ENCODE measurements at regions of chr2 and their contacts with region 1.

Region 1: DNA sequence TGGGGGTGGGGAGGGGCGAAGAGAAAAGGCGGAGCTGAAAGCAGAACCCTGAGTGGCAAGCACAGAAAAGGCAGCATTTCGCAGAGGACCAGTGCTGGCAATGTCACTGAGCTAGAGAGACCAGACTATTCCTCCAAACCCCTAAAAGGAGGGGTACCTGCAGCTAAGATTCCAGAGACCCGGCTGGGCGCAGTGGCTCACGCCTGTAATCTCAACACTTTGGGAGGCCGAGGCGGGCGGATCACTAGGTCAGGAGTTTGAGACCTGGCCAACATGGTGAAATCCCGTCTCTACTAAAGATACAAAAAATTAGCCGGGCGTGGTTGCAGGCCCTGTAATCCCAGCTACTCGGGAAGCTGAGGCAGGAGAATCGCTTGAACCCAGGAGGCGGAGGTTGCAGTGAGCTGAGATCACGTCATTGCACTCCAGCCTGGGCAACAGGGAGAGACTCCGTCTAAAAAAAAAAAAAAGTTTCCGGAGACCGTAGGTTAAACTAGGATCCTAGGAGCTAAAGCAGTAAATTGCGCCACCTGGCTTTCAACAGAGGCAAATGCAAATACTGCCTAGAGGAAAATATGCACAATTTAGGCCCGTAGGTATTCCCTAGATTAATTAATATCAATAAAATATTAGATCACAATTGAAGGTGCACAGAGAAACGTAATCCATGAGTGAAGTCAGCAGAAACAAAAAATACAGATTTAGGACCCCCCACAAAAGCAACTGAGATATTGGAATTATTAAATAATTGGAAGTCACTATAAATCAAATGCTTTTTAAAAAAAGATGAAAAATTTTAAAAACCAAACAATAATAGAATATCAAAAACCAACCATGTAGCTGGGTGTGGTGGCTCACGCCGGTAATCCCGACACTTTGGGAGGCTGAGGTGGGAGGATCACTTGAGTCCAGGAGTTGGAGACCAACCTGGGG is 4.9 kb downstream of the UCN start:
- DNase-seq: peak; percentile 80 to 86
- ATAC-seq: peak; percentile 47 to 85; a peak in 4 of 6 replicates
- H3K4me3 ChIP-seq: peak overlapping the region; percentile 37
- H3K27ac ChIP-seq: peak overlapping the region; percentile 60 to 83
- H3K4me1 ChIP-seq: 0 out of 3 replicates have a peak, but pooled peaks cover 3% of the 10 kb centered on the region
- CTCF ChIP-seq: peak; percentile 97
- EP300 ChIP-seq: no peak
- POLR2A ChIP-seq: no peak
- RAD21 ChIP-seq: peak; percentile 92

Region 2: DNA sequence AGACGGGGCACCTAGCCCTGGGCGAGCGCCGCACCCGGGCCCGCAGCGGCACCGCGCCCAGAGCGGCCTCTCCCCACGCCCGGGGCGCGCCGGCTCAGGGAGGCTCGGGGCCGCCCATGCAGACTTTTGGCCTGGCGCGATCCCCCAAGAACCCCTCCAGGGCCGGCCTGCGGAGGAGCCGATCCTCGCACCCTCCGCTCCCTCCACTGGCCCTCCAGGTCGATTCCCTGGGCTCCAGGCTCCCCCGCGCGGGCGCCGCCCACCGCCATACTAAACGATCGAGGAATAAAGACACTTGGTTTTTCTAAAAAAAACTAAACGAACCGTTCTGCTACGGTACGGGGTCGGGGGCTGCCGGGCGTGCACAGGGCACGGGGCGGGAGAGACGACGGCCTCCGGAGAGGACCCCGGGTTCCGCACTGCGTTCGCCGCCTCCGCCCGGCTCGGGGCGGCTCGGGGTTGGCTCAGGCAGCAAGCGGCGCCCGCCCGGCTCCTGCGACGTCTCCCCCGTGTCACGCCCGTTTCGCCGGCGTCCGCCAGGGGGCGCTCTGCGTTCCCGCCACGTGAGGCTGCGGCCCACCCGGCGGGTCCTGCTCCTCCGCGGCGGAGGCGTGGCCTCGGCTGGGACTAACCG is 217.2 kb before region 1 on chr2:
- CTCF ChIA-PET with region 1: interaction called, 17 read pairs
- POLR2A ChIA-PET with region 1: interaction called, 4 read pairs
- DNase-seq: peak; percentile 95 to 97
- ATAC-seq: peak; percentile 73 to 89
- H3K4me3 ChIP-seq: peak overlapping the region; percentile 70
- H3K27ac ChIP-seq: peak overlapping the region; percentile 90 to 91
- H3K4me1 ChIP-seq: peaks cover 17% of the 10 kb centered on the region
- CTCF ChIP-seq: peak; percentile 98
- EP300 ChIP-seq: no peak
- POLR2A ChIP-seq: peak; percentile 41; the same call in 1 of the 2 replicates
- RAD21 ChIP-seq: peak; percentile 31 to 63; a peak in 4 of 5 replicates

Region 3: GRCh38 chr2:27170581-27171333 is 132.6 kb before region 1 on chr2:
- CTCF ChIA-PET with region 1: interaction called, 29 read pairs
- POLR2A ChIA-PET with region 1: no interaction called
- DNase-seq: no peak
- ATAC-seq: no peak
- H3K4me3 ChIP-seq: no peak overlapping the region
- H3K27ac ChIP-seq: no peak overlapping the region
- H3K4me1 ChIP-seq: no peaks in the 10 kb centered on the region
- CTCF ChIP-seq: no peak
- EP300 ChIP-seq: no peak
- POLR2A ChIP-seq: no peak
- RAD21 ChIP-seq: no peak

Region 4: DNA sequence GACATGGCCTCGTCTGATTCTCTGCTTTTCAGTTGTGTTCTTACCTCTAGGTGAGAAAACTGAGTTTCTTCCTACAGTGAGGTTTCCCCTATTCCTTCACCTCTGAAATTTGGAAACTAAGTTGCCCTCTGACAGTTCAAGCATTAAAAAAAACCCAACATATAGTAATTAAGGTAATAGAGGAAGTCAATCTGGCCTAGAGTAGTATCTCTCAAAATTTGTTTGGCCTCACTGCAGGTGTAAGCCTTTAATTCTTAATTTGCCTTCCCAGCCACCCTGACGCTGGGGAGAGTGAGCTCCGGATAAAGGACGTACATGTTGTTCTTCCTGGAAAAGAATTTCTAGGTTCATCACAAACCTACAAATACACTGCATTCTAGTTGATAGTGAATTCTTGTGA is 84.7 kb before region 1 on chr2:
- CTCF ChIA-PET with region 1: no interaction called
- POLR2A ChIA-PET with region 1: no interaction called
- DNase-seq: no peak
- ATAC-seq: no peak
- H3K4me3 ChIP-seq: peak overlapping the region; percentile 65; the same call in 2 of the 3 replicates
- H3K27ac ChIP-seq: peak overlapping the region in 1 of 2 experiments; percentile 95; a peak in 5 of 6 replicates
- H3K4me1 ChIP-seq: peaks cover 23% of the 10 kb centered on the region
- CTCF ChIP-seq: no peak
- EP300 ChIP-seq: no peak
- POLR2A ChIP-seq: no peak
- RAD21 ChIP-seq: no peak

Region 5: DNA sequence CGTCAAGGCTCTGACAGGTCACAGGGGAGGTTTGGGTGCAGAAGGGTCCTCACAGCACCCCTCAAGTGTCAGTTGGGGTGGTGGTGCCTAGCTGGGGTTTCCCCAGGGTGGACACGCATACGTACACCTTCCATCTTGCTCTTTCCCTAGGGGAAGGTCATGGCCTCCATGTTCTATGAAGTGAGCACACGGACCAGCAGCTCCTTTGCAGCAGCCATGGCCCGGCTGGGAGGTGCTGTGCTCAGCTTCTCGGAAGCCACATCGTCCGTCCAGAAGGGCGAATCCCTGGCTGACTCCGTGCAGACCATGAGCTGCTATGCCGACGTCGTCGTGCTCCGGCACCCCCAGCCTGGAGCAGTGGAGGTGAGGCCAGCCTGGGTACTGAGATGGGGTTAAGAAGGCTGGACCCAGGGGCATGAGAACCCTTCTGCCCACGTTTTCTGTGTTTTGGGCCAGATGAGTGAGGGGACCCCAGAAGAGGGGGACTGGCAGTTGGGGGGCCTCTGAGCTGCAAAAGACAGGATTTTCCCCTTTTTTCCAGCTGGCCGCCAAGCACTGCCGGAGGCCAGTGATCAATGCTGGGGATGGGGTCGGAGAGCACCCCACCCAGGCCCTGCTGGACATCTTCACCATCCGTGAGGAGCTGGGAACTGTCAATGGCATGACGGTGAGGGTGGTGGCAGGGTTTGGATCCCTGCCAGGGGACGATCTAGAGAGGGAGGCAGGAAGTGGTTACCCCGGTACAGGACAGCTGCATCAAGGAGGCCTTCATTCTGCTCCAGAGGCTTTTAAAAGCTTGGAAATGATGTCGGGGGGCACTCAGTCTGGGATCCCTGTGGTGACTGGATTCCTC is 61.4 kb before region 1 on chr2:
- CTCF ChIA-PET with region 1: interaction called, 45 read pairs
- POLR2A ChIA-PET with region 1: no interaction called
- DNase-seq: no peak
- ATAC-seq: no peak
- H3K4me3 ChIP-seq: no peak overlapping the region
- H3K27ac ChIP-seq: no peak overlapping the region
- H3K4me1 ChIP-seq: no peaks in the 10 kb centered on the region
- CTCF ChIP-seq: no peak
- EP300 ChIP-seq: no peak
- POLR2A ChIP-seq: no peak
- RAD21 ChIP-seq: no peak

Region 6: GRCh38 chr2:27264753-27265535 is 38.4 kb before region 1 on chr2:
- CTCF ChIA-PET with region 1: interaction called, 196 read pairs
- POLR2A ChIA-PET with region 1: no interaction called
- DNase-seq: peak; percentile 82 to 96
- ATAC-seq: peak; percentile 77 to 82
- H3K4me3 ChIP-seq: peak overlapping the region; percentile 75
- H3K27ac ChIP-seq: peak overlapping the region; percentile 32 to 73; a peak in 5 of 6 replicates
- H3K4me1 ChIP-seq: peaks cover 21% of the 10 kb centered on the region
- CTCF ChIP-seq: peak; percentile 71
- EP300 ChIP-seq: no peak
- POLR2A ChIP-seq: no peak
- RAD21 ChIP-seq: peak; percentile 40 to 59; a peak in 4 of 5 replicates

Region 7: GRCh38 chr2:27291865-27292264 is 11.5 kb before region 1 on chr2:
- CTCF ChIA-PET with region 1: interaction called, 394 read pairs
- POLR2A ChIA-PET with region 1: interaction called, 8 read pairs
- DNase-seq: peak; percentile 36 to 66
- ATAC-seq: peak; percentile 77 to 79
- H3K4me3 ChIP-seq: no peak overlapping the region
- H3K27ac ChIP-seq: peak overlapping the region; percentile 19 to 49; a peak in 4 of 6 replicates
- H3K4me1 ChIP-seq: peaks cover 36% of the 10 kb centered on the region
- CTCF ChIP-seq: peak; percentile 36
- EP300 ChIP-seq: no peak
- POLR2A ChIP-seq: no peak
- RAD21 ChIP-seq: peak; percentile 57 to 68

Region 8: DNA sequence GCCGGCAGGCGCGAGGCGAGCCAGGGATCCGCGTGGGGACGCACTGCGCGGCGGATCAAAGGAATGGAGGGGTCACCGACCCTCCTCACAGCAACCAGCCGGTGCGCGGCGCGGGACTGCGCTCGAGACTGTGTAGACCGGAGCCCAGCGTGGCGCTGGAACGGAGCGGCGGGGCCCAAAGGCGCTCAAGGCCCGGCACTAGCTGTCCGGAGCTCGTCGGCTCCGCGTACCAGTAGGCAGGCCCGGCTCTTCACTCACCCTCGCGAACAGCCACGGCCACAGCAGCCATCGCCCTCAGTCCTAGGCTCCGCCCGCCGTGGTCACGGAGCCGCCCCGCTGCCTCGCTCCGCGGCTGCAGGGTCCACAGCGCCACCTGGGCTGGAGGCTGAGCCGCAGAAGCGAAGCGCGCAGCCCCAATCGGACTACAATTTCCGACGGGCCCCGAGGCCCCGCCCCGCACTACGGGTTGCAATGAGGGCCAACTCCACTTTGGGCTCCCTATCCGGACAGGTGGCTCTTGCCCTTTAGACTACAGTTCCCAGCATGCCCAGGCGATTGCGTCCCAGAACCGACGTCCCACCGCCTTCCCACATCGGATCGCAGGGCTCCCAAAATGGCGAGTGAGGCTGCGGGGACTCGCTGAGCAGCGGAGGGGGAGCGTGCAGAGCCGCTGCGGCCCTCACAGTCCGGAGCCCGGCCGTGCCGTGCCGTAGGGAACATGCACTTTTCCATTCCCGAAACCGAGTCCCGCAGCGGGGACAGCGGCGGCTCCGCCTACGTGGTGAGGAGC is 66.9 kb after region 1 on chr2 and contains the starts of genes EIF2B4 and SNX17:
- CTCF ChIA-PET with region 1: interaction called, 10 read pairs
- POLR2A ChIA-PET with region 1: no interaction called
- DNase-seq: peak; percentile 98 to 99
- ATAC-seq: peak; percentile 90 to 94
- H3K4me3 ChIP-seq: peak within 1 kb of the TSS; percentile 79
- H3K27ac ChIP-seq: peak within 1 kb of the TSS; percentile 89 to 95
- H3K4me1 ChIP-seq: peaks cover 24% of the 10 kb centered on the region
- CTCF ChIP-seq: peak; percentile 94
- EP300 ChIP-seq: peak in 1 of 2 experiments; percentile 24; a peak in 1 of 5 replicates
- POLR2A ChIP-seq: peak; percentile 90
- RAD21 ChIP-seq: peak; percentile 58; a peak in 3 of 5 replicates
- polyA plus RNA-seq, gene EIF2B4: 62.8 and 90.3 TPM in 2 replicates
- polyA plus RNA-seq, gene SNX17: 141 and 158 TPM in 2 replicates

Region 9: GRCh38 chr2:27537287-27537686 is 233.9 kb after region 1 on chr2:
- CTCF ChIA-PET with region 1: no interaction called
- POLR2A ChIA-PET with region 1: no interaction called
- DNase-seq: no peak
- ATAC-seq: peak; percentile 13 to 47; a peak in 3 of 6 replicates
- H3K4me3 ChIP-seq: no peak overlapping the region
- H3K27ac ChIP-seq: no peak overlapping the region
- H3K4me1 ChIP-seq: no peaks in the 10 kb centered on the region
- CTCF ChIP-seq: no peak
- EP300 ChIP-seq: no peak
- POLR2A ChIP-seq: no peak
- RAD21 ChIP-seq: no peak